Activated T-helper 1 cell treated with anti-CD3 and anti-CD28 coated beads, Interleukin-12 subunit alpha, Interleukin-12 subunit beta, Interleukin-2, Interleukin-4 antibody, amounts not matched to agents 30 ng/mL and 10 ng/mL and 1 ng/mL, durations not matched to agents 14 hours and 24 hours and 36 hours (primary cell): ENCODE measurements at regions of chr7 and their contacts with region 1.

Region 1: DNA sequence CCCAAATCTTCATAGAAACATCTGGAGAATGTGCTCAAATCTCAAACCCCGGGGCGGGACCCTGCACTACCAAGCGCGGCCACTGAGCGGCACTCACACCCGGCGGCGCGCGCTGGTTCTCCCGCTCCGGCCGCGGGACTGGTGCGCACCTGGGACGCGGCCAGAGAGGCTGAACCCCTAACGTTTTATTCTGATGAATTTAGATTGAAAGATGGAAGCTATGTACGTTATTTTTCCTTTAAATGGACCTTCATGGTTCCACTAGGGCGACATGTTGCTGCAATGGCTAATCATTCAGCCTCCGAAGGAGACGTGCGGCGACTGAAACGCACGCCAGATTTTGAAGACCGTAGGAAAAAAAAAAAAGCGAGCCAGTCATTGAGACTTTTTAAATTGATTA is 107.0 kb upstream of the INSIG1 start:
- DNase-seq: peak; percentile 44
- H3K4me3 Mint-ChIP-seq: no peak overlapping the region
- H3K27ac Mint-ChIP-seq: peak overlapping the region; percentile 55
- H3K4me1 Mint-ChIP-seq: peaks cover 17% of the 10 kb centered on the region
- H3K27me3 Mint-ChIP-seq: peaks cover 13% of the 10 kb centered on the region

Region 2: DNA sequence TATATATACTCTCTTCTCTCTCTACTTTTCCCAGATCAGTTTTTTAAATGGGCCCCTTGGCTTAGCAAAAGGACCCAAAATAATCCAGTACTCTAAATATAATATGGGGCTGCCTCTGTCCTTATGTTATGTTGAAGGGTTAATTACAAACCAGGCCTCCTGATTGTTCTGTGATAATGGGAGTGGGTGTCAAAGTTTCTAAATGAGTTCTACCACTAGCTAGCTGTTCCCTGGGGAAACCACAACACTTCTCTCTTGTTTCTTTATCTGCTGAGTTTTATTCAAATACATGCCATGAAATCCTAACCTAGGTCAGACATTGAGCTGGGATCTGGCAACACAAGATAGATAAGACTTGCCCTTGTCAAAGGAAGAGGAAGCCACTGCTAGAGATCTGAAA is 116.8 kb before region 1 on chr7:
- intact Hi-C with region 1: no loop called
- DNase-seq: no peak
- H3K4me3 Mint-ChIP-seq: no peak overlapping the region
- H3K27ac Mint-ChIP-seq: no peak overlapping the region
- H3K4me1 Mint-ChIP-seq: no peaks in the 10 kb centered on the region
- H3K27me3 Mint-ChIP-seq: peaks cover 20% of the 10 kb centered on the region

Region 3: DNA sequence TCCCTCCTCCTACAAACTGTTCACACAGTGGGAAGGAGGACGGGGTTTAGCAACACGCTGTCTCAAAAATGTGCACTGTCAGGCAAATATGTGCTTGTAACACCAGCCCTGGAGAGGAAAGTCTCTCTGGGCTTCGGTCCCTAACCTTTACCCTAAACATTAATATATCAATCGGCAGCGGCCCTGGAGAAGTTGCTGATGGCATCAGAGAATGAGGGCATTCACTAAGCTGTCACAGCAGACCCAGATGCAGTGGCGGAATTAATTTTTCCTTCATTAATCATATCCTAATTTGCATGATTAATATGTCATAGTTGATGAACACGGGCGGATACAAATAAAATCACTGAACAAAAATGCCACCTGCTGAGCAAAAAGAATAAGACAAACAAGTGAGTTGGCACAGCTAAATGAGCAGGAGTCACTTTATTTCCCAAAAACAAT is 61.8 kb after region 1 on chr7:
- intact Hi-C with region 1: loop called (anchors 1 kb)
- DNase-seq: no peak
- H3K4me3 Mint-ChIP-seq: no peak overlapping the region
- H3K27ac Mint-ChIP-seq: no peak overlapping the region
- H3K4me1 Mint-ChIP-seq: peaks cover 4% of the 10 kb centered on the region
- H3K27me3 Mint-ChIP-seq: peaks cover 10% of the 10 kb centered on the region